GM12878 (cell line): ENCODE measurements at regions of chr5 and their contacts with region 1.

Region 1: GRCh38 chr5:59356813-59357380 is 536.6 kb downstream of the PDE4D start:
- DNase-seq: no peak
- ATAC-seq: no peak
- H3K4me3 ChIP-seq: no peak overlapping the region
- H3K27ac ChIP-seq: no peak overlapping the region
- H3K4me1 ChIP-seq: no peaks in the 10 kb centered on the region
- H3K27me3 ChIP-seq: no peaks in the 10 kb centered on the region; a peak in 1 of 4 replicates
- CTCF ChIP-seq: no peak
- EP300 ChIP-seq: no peak
- POLR2A ChIP-seq: no peak
- RAD21 ChIP-seq: no peak

Region 2: DNA sequence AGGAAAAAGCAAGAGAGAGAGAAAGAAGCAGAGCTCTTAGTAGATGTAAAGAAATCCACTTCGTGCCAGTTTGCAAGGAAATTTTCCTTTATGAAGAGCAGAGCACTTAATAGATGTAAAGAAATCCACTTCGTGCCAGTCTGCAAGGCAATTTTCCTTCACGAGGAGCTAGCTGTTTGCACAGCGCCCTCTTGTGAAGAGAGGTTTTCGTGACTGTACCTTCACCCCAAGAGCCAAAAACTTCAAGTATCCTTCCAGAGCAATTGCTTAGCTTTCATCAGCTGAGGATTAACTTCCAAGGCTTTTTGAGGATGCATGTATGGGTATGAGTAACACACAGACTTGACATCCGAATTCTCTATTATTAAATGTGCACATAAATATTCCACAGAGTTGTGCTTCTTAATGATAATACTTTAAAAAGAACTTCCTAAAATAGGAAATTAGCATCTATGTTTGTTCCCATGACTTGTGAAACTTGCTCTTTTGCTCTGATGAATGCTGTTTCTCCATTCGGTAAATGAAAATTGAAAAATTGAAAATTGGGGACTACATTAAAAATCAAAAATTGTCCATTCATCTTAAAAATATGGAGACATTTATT is 11.0 kb after region 1 on chr5:
- CTCF ChIA-PET with region 1: interaction called, 31 read pairs
- POLR2A ChIA-PET with region 1: no interaction called
- RAD21 ChIA-PET with region 1: no interaction called
- SMC1A ChIA-PET with region 1: interaction called, 5 read pairs
- in situ Hi-C with region 1: no loop called
- intact Hi-C with region 1: no loop called
- DNase-seq: no peak
- ATAC-seq: peak; percentile 74
- H3K4me3 ChIP-seq: no peak overlapping the region
- H3K27ac ChIP-seq: no peak overlapping the region
- H3K4me1 ChIP-seq: no peaks in the 10 kb centered on the region
- H3K27me3 ChIP-seq: no peaks in the 10 kb centered on the region; a peak in 1 of 4 replicates
- CTCF ChIP-seq: peak; percentile 63 to 67 (median 66)
- EP300 ChIP-seq: no peak
- POLR2A ChIP-seq: no peak
- RAD21 ChIP-seq: peak; percentile 67